Left ventricle myocardium superior (tissue), 1 donor: ENCODE measurements at regions of chr3 and their contacts with region 1.

Region 1: GRCh38 chr3:80068459-80068858 is 300.7 kb upstream of the ROBO1 start:
- DNase-seq: no peak
- ATAC-seq: no peak

Region 2: GRCh38 chr3:80087767-80088166 is 19.3 kb after region 1 on chr3:
- intact Hi-C with region 1: loop called (anchors 1 kb)
- DNase-seq: no peak
- ATAC-seq: no peak